Heart right ventricle (tissue), 16 donors: ENCODE measurements at regions of chr14 and their contacts with region 1.

Region 1: GRCh38 chr14:92951912-92952471 is 29.0 kb downstream of the CHGA start:
- DNase-seq: peak; percentile 76 to 85
- ATAC-seq: peak; percentile 73 to 91 (median 82)
- H3K4me3 ChIP-seq: no peak overlapping the region
- H3K27ac ChIP-seq: peak overlapping the region; percentile 50 to 79 (median 69)
- H3K4me1 ChIP-seq: peaks cover 9 to 64% (median 38%) of the 10 kb centered on the region in 9 donors
- H3K27me3 ChIP-seq: no peaks in the 10 kb centered on the region
- CTCF ChIP-seq: peak; percentile 92 to 98 (median 97)

Region 2: GRCh38 chr14:93033983-93034670 is 82.1 kb after region 1 on chr14:
- intact Hi-C with region 1: loop called in 1 of 10 experiments (anchors 5 kb)
- DNase-seq: no peak
- ATAC-seq: peak in 6 of 8 donors; percentile 25 to 59 (median 42)
- H3K4me3 ChIP-seq: no peak overlapping the region
- H3K27ac ChIP-seq: peak overlapping the region in 4 of 10 donors; percentile 19 to 55 (median 43)
- H3K4me1 ChIP-seq: peaks cover 10 to 73% (median 65%) of the 10 kb centered on the region in 9 donors
- H3K27me3 ChIP-seq: no peaks in the 10 kb centered on the region
- CTCF ChIP-seq: peak in 8 of 9 donors; percentile 9 to 63 (median 53)

Region 3: GRCh38 chr14:93042968-93043940 is 91.3 kb after region 1 on chr14:
- intact Hi-C with region 1: loop called in 2 of 10 experiments (anchors 5 kb)
- DNase-seq: peak; percentile 72 to 74
- ATAC-seq: peak; percentile 52 to 82 (median 76)
- H3K4me3 ChIP-seq: no peak overlapping the region
- H3K27ac ChIP-seq: peak overlapping the region; percentile 46 to 92 (median 86)
- H3K4me1 ChIP-seq: peaks cover 18 to 95% (median 83%) of the 10 kb centered on the region in 9 donors
- H3K27me3 ChIP-seq: no peaks in the 10 kb centered on the region
- CTCF ChIP-seq: no peak

Region 4: GRCh38 chr14:93109572-93110481 is 157.8 kb after region 1 on chr14:
- intact Hi-C with region 1: loop called in 4 of 10 experiments (anchors 2 to 5 kb)
- DNase-seq: no peak
- ATAC-seq: no peak
- H3K4me3 ChIP-seq: no peak overlapping the region
- H3K27ac ChIP-seq: no peak overlapping the region
- H3K4me1 ChIP-seq: peaks cover 16 to 83% (median 56%) of the 10 kb centered on the region in 9 donors
- H3K27me3 ChIP-seq: no peaks in the 10 kb centered on the region
- CTCF ChIP-seq: no peak

Region 5: GRCh38 chr14:93137864-93138263 is 185.9 kb after region 1 on chr14:
- intact Hi-C with region 1: loop called (anchors 1 to 5 kb)
- DNase-seq: peak in 1 of 2 donors; percentile 63
- ATAC-seq: peak; percentile 61 to 79 (median 74)
- H3K4me3 ChIP-seq: no peak overlapping the region
- H3K27ac ChIP-seq: no peak overlapping the region
- H3K4me1 ChIP-seq: peaks cover 0 to 9% (median 0%) of the 10 kb centered on the region in 9 donors
- H3K27me3 ChIP-seq: no peaks in the 10 kb centered on the region
- CTCF ChIP-seq: peak in 4 of 9 donors; percentile 12 to 30 (median 21)